ENCODE measurements at regions of chr5 and their contacts with region 1.

Region 1: GRCh38 chr5:54517174-54518092 is at the start of gene SNX18:
- DNase-seq: peak; percentile 91 to 93 (median 93)
- H3K4me3 ChIP-seq: peak within 1 kb of the TSS; percentile 44 to 62
- H3K4me3 Mint-ChIP-seq: peak within 1 kb of the TSS; percentile 83 to 93 (median 90)
- H3K27ac ChIP-seq: peak within 1 kb of the TSS; percentile 63
- H3K27ac Mint-ChIP-seq: peak within 1 kb of the TSS; percentile 32 to 81 (median 57)
- H3K4me1 ChIP-seq: peaks cover 40% of the 10 kb centered on the region
- H3K4me1 Mint-ChIP-seq: peaks cover 4 to 31% (median 16%) of the 10 kb centered on the region in 4 donors
- H3K27me3 ChIP-seq: no peaks in the 10 kb centered on the region
- H3K27me3 Mint-ChIP-seq: no peaks in the 10 kb centered on the region
- total RNA-seq, gene SNX18: 27.9 to 31.4 TPM

Region 2: GRCh38 chr5:54590824-54591223 is 73.4 kb after region 1 on chr5:
- CTCF ChIA-PET with region 1: no interaction called
- POLR2A ChIA-PET with region 1: no interaction called
- intact Hi-C with region 1: no loop called
- DNase-seq: no peak
- H3K4me3 ChIP-seq: no peak overlapping the region
- H3K4me3 Mint-ChIP-seq: no peak overlapping the region
- H3K27ac ChIP-seq: no peak overlapping the region
- H3K27ac Mint-ChIP-seq: peak overlapping the region in 1 of 7 donors; percentile 66
- H3K4me1 ChIP-seq: no peaks in the 10 kb centered on the region
- H3K4me1 Mint-ChIP-seq: no peaks in the 10 kb centered on the region
- H3K27me3 ChIP-seq: no peaks in the 10 kb centered on the region
- H3K27me3 Mint-ChIP-seq: no peaks in the 10 kb centered on the region

Region 3: DNA sequence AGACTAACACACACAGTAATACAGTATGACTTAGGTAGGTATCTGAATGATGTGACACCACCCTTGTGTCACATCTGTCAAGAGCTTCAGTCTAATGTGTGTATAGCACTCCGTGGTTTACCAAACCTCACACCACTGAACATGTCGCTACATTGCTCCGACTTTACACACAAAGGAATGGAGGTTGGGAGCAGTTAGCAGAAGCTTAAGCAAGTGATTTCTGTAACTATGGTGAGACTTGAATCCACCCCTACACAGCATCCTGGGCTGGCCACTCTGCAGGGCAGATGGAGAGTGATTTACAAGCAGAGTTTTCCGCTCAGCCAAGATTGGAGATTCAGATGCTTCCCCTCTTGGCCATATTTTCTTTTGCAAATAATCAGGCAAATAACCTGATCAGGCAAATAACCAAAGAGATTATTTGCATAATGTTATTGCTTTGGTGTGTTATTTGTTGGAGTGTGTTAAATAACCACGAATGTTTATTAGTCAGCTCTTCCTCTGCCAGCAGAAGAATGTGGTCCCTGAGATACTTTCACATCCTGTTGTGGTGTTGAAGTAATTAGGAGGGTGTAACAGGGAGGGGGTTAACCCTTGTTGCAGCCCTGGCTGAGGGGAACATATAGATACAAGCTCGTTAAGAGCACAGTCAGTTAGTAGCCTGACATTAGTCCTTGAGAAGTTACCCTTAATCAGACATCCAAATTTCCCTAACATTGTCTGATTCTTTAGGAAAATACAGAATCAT is 92.9 kb after region 1 on chr5:
- CTCF ChIA-PET with region 1: interaction called, 12 read pairs
- POLR2A ChIA-PET with region 1: interaction called, 40 read pairs
- intact Hi-C with region 1: no loop called
- DNase-seq: peak; percentile 43 to 60 (median 55)
- H3K4me3 ChIP-seq: peak overlapping the region; percentile 3 to 49
- H3K4me3 Mint-ChIP-seq: peak overlapping the region; percentile 54 to 86 (median 77)
- H3K27ac ChIP-seq: no peak overlapping the region
- H3K27ac Mint-ChIP-seq: peak overlapping the region; percentile 64 to 84 (median 68)
- H3K4me1 ChIP-seq: peaks cover 22% of the 10 kb centered on the region
- H3K4me1 Mint-ChIP-seq: peaks cover 23 to 25% (median 25%) of the 10 kb centered on the region in 4 donors
- H3K27me3 ChIP-seq: no peaks in the 10 kb centered on the region
- H3K27me3 Mint-ChIP-seq: no peaks in the 10 kb centered on the region

Region 4: DNA sequence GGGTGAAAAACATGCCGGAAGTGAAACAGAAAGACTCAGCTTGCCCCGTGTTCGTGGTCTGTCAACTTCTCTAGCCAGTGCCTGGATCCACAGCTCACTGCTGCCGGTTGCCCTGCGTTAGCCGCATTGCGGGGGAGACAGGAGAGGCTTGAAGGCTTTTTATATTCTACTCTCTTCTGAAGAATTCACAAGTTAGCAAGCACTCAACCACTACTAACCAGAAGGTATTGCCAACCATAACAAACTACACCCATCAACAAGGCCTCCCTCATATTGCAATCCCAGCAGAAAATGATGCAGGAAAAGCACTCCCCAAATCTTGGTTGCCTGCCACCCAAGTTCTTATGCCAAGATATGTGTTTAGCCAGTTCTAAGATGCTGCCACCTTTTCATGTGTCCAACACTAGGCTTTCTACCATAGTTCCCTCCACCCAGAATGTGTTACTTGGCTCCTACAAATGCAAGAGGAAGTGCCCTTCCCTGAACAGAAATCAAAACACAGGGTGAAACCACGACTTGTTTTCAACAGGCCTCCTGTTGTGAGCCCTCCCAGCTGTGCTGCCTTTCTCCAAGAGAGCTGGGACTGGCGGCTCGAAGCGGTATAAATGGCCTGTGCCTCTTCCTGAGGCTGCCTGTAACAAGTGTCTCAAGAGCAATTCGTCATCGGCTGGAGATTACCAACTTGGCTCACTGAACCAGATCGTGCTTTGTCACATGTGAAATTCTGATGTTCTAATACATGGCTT is 129.1 kb after region 1 on chr5:
- CTCF ChIA-PET with region 1: interaction called, 22 read pairs
- POLR2A ChIA-PET with region 1: interaction called, 34 read pairs
- intact Hi-C with region 1: loop called (anchors 1 kb)
- DNase-seq: peak; percentile 60 to 69 (median 61)
- H3K4me3 ChIP-seq: peak overlapping the region; percentile 31 to 50
- H3K4me3 Mint-ChIP-seq: peak overlapping the region; percentile 72 to 83 (median 76)
- H3K27ac ChIP-seq: peak overlapping the region; percentile 30
- H3K27ac Mint-ChIP-seq: peak overlapping the region; percentile 87 to 95 (median 91)
- H3K4me1 ChIP-seq: peaks cover 53% of the 10 kb centered on the region
- H3K4me1 Mint-ChIP-seq: peaks cover 38 to 64% (median 53%) of the 10 kb centered on the region in 4 donors
- H3K27me3 ChIP-seq: no peaks in the 10 kb centered on the region
- H3K27me3 Mint-ChIP-seq: no peaks in the 10 kb centered on the region

Region 5: GRCh38 chr5:54743997-54744788 is 226.8 kb after region 1 on chr5:
- CTCF ChIA-PET with region 1: interaction called, 30 read pairs
- POLR2A ChIA-PET with region 1: interaction called, 45 read pairs
- intact Hi-C with region 1: loop called (anchors 2 kb)
- DNase-seq: peak; percentile 69 to 78 (median 75)
- H3K4me3 ChIP-seq: no peak overlapping the region
- H3K4me3 Mint-ChIP-seq: peak overlapping the region; percentile 24 to 84 (median 60)
- H3K27ac ChIP-seq: peak overlapping the region; percentile 20
- H3K27ac Mint-ChIP-seq: peak overlapping the region; percentile 82 to 93 (median 84)
- H3K4me1 ChIP-seq: peaks cover 49% of the 10 kb centered on the region
- H3K4me1 Mint-ChIP-seq: peaks cover 25 to 42% (median 33%) of the 10 kb centered on the region in 4 donors
- H3K27me3 ChIP-seq: no peaks in the 10 kb centered on the region
- H3K27me3 Mint-ChIP-seq: no peaks in the 10 kb centered on the region

Region 6: DNA sequence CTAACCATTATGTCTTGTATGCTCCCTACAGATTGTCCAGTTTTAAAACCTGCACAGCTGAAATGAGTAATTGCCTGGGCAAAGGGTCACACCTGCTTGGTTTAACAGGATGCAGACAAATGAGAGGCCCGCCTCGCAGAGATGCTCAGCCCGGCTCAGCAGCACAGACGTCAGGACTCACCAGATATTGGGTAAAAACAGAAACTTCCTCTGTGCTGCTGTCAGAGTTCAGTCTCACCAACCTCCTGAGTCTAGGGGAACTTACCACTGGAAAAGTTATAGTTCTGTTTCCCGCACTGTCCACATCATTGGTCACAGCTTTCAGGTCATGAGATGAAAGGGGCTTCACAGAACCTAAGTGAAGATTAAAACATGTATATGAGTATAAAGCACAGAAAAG is 315.4 kb after region 1 on chr5:
- CTCF ChIA-PET with region 1: interaction called, 17 read pairs
- POLR2A ChIA-PET with region 1: interaction called, 3 read pairs
- intact Hi-C with region 1: no loop called
- DNase-seq: no peak
- H3K4me3 ChIP-seq: no peak overlapping the region
- H3K4me3 Mint-ChIP-seq: no peak overlapping the region
- H3K27ac ChIP-seq: no peak overlapping the region
- H3K27ac Mint-ChIP-seq: peak overlapping the region in 3 of 7 donors; percentile 47 to 78 (median 54)
- H3K4me1 ChIP-seq: peaks cover 12% of the 10 kb centered on the region
- H3K4me1 Mint-ChIP-seq: peaks cover 10 to 18% (median 11%) of the 10 kb centered on the region in 4 donors
- H3K27me3 ChIP-seq: no peaks in the 10 kb centered on the region
- H3K27me3 Mint-ChIP-seq: peaks cover 1 to 2% of the 10 kb centered on the region in 2 donors

Region 7: DNA sequence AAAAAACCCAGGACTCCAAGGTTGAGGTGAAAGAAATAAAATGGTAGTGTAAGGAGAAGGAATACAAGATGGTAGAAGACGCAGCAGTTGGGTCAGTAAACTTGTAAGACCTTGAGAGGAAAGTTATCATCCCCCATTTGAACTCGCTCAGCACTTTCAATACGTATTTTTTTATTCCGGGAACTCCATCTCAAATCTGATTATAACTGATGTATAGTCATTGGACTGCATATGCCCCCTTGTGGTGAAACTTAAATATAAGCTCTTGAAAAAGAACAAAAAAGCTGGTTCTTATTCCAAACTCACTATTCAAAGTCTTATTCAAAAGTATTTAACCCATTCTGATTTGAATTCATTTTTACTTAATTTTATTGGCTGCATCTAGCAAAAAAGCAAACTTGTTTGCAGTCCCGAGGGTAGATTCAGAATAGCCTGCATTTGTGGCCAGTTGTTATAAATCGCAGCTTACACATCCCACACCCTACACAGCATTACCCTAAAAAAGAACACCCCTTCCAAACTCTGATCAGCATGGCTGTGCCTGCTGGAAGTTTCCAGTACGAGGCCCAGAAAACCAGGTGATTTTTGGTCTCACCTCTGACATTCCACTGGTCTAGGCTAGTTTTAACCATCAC is 350.0 kb after region 1 on chr5:
- CTCF ChIA-PET with region 1: interaction called, 88 read pairs
- POLR2A ChIA-PET with region 1: interaction called, 26 read pairs
- intact Hi-C with region 1: loop called (anchors 1 kb)
- DNase-seq: peak in 4 of 5 donors; percentile 58 to 66 (median 62)
- H3K4me3 ChIP-seq: no peak overlapping the region
- H3K4me3 Mint-ChIP-seq: peak overlapping the region in 7 of 8 donors; percentile 15 to 75 (median 39)
- H3K27ac ChIP-seq: no peak overlapping the region
- H3K27ac Mint-ChIP-seq: peak overlapping the region in 2 of 7 donors; percentile 3 to 11
- H3K4me1 ChIP-seq: peaks cover 4% of the 10 kb centered on the region
- H3K4me1 Mint-ChIP-seq: peaks cover 0 to 5% (median 4%) of the 10 kb centered on the region in 4 donors
- H3K27me3 ChIP-seq: peaks cover 3% of the 10 kb centered on the region
- H3K27me3 Mint-ChIP-seq: peaks cover 26% of the 10 kb centered on the region in 2 donors